ENCODE measurements at regions of chr5 and their contacts with region 1.

Region 1: GRCh38 chr5:7815892-7816534 is 34.9 kb downstream of the CFAP90 start:
- H3K4me3 Mint-ChIP-seq: no peak overlapping the region
- H3K27ac Mint-ChIP-seq: no peak overlapping the region
- H3K4me1 Mint-ChIP-seq: peaks cover 13% of the 10 kb centered on the region
- H3K27me3 Mint-ChIP-seq: no peaks in the 10 kb centered on the region

Region 2: DNA sequence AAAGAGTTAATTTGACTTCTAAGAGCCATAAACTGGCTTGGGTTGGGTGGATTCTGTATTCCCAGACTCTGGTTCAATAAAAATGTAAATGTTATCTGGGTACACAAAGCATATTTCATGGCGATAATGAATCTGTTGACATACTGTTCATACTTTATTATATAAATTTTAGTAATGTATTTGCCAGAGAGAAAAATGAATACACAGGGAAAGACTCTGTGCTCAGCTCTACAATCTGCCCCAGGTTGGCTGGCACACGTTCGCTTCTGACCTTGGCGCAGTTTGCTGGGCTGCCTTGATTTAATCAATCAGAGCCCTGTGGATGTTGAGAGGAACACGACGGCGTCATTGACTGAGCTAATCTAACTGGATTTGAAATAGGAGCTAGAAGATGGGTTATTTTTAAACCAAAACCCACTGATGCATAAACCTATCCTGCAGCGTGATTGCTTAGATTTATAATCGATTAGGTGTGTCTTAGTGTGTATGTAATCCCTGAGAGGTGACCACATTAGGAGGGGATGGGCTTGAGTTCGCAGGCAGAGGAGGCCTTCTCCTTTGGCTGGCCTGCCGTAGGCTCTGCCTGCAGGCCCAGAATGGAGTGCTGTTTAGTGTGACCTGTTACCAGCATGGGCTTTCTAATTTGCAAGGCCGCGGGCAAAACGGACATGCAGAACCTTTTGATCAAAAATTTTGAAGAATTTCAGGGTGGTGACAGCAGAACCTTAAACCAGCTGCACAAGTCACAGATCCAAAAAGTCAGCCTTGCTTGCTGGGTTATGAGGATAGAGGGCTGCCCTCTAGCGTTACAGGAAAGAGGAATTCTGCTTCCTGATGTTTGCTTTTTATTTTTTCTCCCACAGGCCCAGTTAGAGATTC is 424.0 kb before region 1 on chr5:
- intact Hi-C with region 1: loop called (anchors 10 kb)
- H3K4me3 Mint-ChIP-seq: no peak overlapping the region
- H3K27ac Mint-ChIP-seq: no peak overlapping the region
- H3K4me1 Mint-ChIP-seq: peaks cover 12% of the 10 kb centered on the region
- H3K27me3 Mint-ChIP-seq: peaks cover 39% of the 10 kb centered on the region

Region 3: DNA sequence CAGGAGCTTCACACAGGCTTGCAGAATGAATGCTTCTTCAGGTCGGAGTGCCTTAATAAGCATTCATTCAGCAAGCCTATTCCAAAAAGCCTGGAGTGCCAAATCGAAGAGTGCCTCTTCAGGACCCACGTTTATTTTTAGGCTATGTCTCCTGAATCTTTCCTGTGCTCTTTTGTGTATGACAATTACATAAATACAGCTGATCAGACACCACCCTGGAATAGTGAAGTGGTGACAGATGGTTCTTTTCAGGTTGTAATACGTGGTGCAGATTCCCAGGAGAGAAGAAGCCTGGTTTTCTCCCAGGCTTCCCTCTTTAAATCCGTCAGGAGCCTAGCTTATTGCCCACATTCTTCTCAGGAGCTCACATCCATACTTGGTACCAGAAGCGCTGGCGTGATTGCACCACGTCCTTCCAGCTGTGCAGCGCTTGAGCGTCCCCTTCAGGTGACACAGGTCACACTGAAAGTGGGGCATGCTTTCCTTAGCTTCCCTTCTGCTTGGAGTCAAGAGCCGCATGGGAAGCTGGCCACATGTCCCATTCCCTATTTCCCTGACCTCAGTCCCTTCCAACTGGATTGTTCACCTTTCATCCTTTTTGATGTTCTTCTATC is 297.0 kb before region 1 on chr5:
- intact Hi-C with region 1: no loop called
- H3K4me3 Mint-ChIP-seq: no peak overlapping the region
- H3K27ac Mint-ChIP-seq: no peak overlapping the region
- H3K4me1 Mint-ChIP-seq: no peaks in the 10 kb centered on the region
- H3K27me3 Mint-ChIP-seq: no peaks in the 10 kb centered on the region

Measured in dendritic cell treated with granulocyte-macrophage colony-stimulating factor and Interleukin-4, amounts not matched to agents 40 ng/mL and 50 ng/mL, for 4 days (primary cell).